Activated naive CD8-positive, alpha-beta T cell treated with anti-CD3 and anti-CD28 coated beads, Interleukin-2, amount 10 ng/mL, durations not matched to agents 7 days and 5 days (primary cell): ENCODE measurements at regions of chr2 and their contacts with region 1.

Region 1: DNA sequence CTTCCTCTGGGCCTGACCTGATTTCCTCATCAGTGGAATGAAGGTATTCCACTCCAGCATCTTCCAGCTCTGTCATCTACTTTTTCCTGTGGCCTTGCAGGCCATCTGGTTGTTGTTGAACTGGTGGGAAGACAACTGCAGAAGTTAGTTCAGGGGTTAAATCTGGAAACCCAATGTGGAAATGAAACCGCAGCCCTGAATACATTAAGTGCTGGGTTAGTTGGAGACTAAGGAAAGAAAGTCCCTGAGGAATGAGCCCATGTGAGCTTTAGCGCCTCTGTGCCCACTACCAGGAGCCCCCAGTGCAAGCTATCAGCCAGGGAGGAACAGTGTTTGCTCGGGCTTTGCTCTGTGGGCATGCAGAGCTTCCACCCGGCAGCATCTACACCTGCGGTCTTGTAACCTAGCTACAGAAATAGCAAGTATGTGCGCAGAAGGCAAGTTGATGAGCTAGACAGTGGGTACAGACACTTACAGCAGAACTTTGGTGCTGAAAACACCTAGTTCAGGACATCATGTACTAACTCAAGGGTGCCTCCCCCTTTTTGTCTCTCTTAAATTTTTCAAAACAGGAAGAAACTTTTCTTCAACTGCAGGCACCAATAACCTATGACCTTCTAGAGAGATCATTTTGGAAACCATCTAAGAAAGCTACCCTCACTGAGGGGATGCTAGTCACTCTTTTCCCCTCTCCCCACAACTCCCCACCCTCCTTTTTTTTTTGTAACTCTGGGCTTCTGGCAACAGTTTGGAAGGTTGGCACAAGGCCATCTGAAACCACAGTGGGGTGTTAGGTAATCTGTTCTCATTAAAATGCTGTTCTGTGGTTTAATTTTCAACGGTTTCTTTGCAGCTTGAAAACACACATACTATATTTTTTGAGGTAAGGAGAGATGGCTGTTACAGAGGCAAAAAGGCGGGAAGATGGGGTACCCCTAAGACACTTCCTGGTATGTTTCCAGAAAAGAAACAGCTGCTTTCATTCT is 18.3 kb upstream of the CXCR4 start:
- DNase-seq: peak; percentile 56
- ATAC-seq: peak; percentile 76
- H3K4me3 Mint-ChIP-seq: peak overlapping the region; percentile 47
- H3K27ac Mint-ChIP-seq: peak overlapping the region; percentile 89
- H3K4me1 Mint-ChIP-seq: peaks cover 75% of the 10 kb centered on the region
- H3K27me3 Mint-ChIP-seq: peaks cover 7% of the 10 kb centered on the region

Region 2: DNA sequence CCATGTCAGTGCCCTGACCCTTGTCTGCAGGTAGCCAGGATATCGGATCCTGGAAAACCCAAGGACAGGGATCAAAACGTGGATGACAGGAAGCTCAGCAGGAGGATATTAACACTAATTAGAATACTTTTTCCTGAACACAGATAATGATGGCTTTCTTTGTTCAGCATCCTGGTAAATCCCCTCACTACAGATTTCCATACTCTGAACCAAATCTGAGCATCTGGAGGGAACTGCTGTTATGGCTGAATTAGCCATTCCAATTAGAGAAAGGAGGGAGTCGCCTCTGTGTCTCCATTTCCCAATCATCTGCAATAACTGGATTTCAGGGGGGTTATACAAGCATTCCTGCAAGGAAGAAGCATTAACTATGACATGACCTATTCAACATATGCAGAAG is 42.6 kb before region 1 on chr2:
- POLR2A ChIA-PET with region 1: no interaction called
- DNase-seq: no peak
- ATAC-seq: no peak
- H3K4me3 Mint-ChIP-seq: no peak overlapping the region
- H3K27ac Mint-ChIP-seq: no peak overlapping the region
- H3K4me1 Mint-ChIP-seq: peaks cover 11% of the 10 kb centered on the region
- H3K27me3 Mint-ChIP-seq: no peaks in the 10 kb centered on the region

Region 3: GRCh38 chr2:136107051-136108033 is 28.9 kb before region 1 on chr2:
- POLR2A ChIA-PET with region 1: no interaction called
- DNase-seq: no peak
- ATAC-seq: no peak
- H3K4me3 Mint-ChIP-seq: no peak overlapping the region
- H3K27ac Mint-ChIP-seq: no peak overlapping the region
- H3K4me1 Mint-ChIP-seq: peaks cover 13% of the 10 kb centered on the region
- H3K27me3 Mint-ChIP-seq: no peaks in the 10 kb centered on the region

Region 4: DNA sequence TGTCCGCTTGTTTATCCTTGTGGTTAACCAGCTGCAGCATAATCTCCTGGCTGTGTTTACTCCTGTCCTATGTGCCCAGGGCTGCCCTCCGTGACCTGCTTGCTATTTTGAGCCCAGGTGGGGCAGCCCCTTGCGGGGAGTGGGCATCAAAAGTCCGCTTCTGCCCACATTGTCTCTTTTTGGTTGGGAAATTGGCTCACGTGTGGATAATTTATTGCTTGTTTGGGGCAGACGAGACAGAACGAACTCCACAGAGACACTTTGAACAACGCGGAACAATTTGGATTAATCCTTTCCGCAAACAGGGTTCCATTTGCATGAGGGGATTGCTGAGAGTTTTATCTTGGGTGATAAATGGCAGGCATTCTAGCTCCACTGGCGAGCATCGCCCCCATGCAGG is 10.2 kb before region 1 on chr2:
- POLR2A ChIA-PET with region 1: interaction called, 17 read pairs
- DNase-seq: no peak
- ATAC-seq: no peak
- H3K4me3 Mint-ChIP-seq: no peak overlapping the region
- H3K27ac Mint-ChIP-seq: peak overlapping the region; percentile 3
- H3K4me1 Mint-ChIP-seq: peaks cover 74% of the 10 kb centered on the region
- H3K27me3 Mint-ChIP-seq: peaks cover 3% of the 10 kb centered on the region

Region 5: GRCh38 chr2:136168720-136169119 is 32.5 kb after region 1 on chr2:
- POLR2A ChIA-PET with region 1: no interaction called
- DNase-seq: no peak
- ATAC-seq: no peak
- H3K4me3 Mint-ChIP-seq: no peak overlapping the region
- H3K27ac Mint-ChIP-seq: no peak overlapping the region
- H3K4me1 Mint-ChIP-seq: peaks cover 5% of the 10 kb centered on the region
- H3K27me3 Mint-ChIP-seq: no peaks in the 10 kb centered on the region

Region 6: DNA sequence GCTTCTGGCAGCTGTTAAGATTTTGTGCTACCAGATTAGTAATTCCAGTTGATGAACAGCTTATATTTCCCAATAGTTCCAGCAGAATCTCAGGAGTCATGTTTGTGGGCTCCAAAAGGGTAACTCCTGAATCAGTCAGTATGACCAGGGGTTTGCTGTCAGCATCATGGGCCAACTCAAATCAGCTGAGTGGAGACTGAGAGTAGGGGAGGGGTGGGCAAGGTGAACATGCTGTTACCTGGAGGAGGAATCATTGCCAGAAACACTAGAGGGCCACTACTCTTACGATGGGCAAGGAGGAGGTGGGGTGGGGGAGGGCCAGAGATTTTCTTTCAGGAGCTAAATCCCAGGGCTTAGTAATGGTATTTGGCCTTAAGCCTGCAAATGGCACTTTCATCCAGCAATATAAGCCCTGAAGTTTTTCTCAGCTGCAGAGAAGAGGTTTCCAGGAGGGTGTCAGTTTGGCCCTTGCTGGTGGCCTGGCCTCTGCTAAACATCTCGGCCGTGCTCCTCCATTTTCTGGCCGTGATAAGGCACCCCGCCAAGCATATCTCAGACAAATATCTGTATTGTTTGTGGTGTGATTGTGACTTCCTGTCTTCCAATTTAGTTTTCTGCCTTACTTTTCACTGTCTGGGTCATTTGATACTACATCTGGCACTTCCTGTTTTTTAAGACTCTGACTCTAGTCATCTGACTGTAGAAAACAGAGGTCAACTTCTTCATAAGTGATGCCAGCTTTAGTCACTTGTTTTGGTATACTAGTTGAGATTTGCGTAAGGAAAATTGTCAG is 102.3 kb after region 1 on chr2:
- POLR2A ChIA-PET with region 1: interaction called, 13 read pairs
- DNase-seq: peak; percentile 45
- ATAC-seq: peak; percentile 67
- H3K4me3 Mint-ChIP-seq: peak overlapping the region; percentile 39
- H3K27ac Mint-ChIP-seq: peak overlapping the region; percentile 85
- H3K4me1 Mint-ChIP-seq: peaks cover 46% of the 10 kb centered on the region
- H3K27me3 Mint-ChIP-seq: no peaks in the 10 kb centered on the region